Right ventricle myocardium superior (tissue), 1 donor: ENCODE measurements at regions of chr1 and their contacts with region 1.

Region 1: GRCh38 chr1:11893907-11894251 is 32.3 kb downstream of the KIAA2013 start:
- DNase-seq: peak; percentile 76
- ATAC-seq: peak; percentile 95

Region 2: DNA sequence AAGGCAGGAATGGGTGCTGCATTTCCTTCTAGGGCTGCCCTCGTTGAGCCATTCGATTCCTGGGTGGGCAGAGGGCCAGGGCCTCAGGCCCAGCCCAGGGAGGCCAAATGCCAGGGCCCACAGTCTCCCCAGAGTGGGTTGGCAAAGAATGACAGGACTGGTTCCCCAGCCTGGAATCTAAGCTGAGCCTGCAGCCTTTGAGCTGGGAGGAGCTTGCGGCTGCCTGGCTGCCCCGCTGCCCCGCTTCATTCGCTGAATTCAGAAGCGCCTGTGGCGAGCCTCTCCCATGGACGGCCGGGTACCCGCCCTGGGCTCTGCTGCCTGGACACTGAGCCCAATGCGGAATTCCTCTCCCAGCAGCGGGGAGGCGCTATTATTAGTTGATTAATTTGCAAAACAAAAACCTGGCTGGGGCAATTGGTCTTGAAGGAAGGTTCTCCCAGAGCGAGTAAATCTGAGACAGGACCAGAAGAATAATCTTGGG is 913.7 kb before region 1 on chr1:
- intact Hi-C with region 1: no loop called
- DNase-seq: peak; percentile 88
- ATAC-seq: peak; percentile 94

Region 3: GRCh38 chr1:11838349-11839272 is 55.3 kb before region 1 on chr1:
- intact Hi-C with region 1: loop called (anchors 1 kb)
- DNase-seq: peak; percentile 85
- ATAC-seq: peak; percentile 91